B cell (primary cell): ENCODE measurements at regions of chr2 and their contacts with region 1.

Region 1: GRCh38 chr2:60550178-60550983 is 3.1 kb downstream of the BCL11A start:
- DNase-seq: peak; percentile 94
- ATAC-seq: peak; percentile 54
- H3K4me3 ChIP-seq: peak overlapping the region; percentile 78 to 98 (median 88)
- H3K4me3 Mint-ChIP-seq: peak overlapping the region; percentile 97
- H3K27ac ChIP-seq: peak overlapping the region; percentile 77 to 91
- H3K27ac Mint-ChIP-seq: peak overlapping the region; percentile 91
- H3K4me1 ChIP-seq: peaks cover 29 to 35% of the 10 kb centered on the region in 2 donors
- H3K4me1 Mint-ChIP-seq: peaks cover 36% of the 10 kb centered on the region
- H3K27me3 ChIP-seq: no peaks in the 10 kb centered on the region
- H3K27me3 Mint-ChIP-seq: no peaks in the 10 kb centered on the region
- CTCF ChIP-seq: peak; percentile 80

Region 2: GRCh38 chr2:59196511-59196910 is 1353.9 kb before region 1 on chr2:
- CTCF ChIA-PET with region 1: no interaction called
- POLR2A ChIA-PET with region 1: interaction called, 13 read pairs
- intact Hi-C with region 1: no loop called
- DNase-seq: no peak
- ATAC-seq: no peak
- H3K4me3 ChIP-seq: no peak overlapping the region
- H3K4me3 Mint-ChIP-seq: no peak overlapping the region
- H3K27ac ChIP-seq: no peak overlapping the region
- H3K27ac Mint-ChIP-seq: no peak overlapping the region
- H3K4me1 ChIP-seq: no peaks in the 10 kb centered on the region
- H3K4me1 Mint-ChIP-seq: no peaks in the 10 kb centered on the region
- H3K27me3 ChIP-seq: peaks cover 0 to 3% (median 0%) of the 10 kb centered on the region in 4 experiments
- H3K27me3 Mint-ChIP-seq: peaks cover 9% of the 10 kb centered on the region
- CTCF ChIP-seq: no peak

Region 3: DNA sequence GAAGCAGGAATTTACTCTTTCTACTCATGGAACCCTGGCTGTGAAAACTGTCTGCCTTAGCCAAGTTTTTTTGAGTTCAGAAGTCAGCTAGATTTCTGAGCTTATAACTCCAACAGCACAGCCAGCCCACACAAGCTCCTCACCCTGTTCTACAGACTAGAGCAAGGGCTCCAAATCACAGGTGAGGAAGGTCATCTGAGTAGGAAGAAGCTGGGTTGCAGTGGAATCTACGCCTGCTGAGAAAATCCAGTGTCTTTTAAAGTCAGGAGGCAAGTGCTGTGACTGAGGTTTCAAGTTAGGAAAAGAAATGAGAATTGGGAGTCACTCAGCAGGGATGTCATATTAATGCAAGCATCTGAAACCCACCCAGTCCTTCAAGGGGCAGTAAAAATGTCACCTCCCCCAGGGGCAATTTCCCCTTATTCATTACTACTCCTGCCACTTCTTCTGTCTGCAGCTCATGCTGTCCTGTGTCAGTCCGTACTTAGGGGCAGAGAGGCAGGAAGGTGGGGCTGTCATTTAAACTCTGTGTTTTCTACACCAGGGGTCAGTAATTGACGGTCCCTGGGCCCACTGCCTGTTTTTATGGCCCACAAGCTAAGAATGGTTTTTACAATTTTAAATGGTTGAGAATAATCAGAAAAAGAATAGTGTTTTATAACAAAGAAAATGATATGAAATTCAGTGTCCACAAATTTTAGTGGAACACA is 548.1 kb before region 1 on chr2:
- CTCF ChIA-PET with region 1: interaction called, 5 read pairs
- POLR2A ChIA-PET with region 1: no interaction called
- intact Hi-C with region 1: loop called (anchors 5 kb)
- DNase-seq: peak; percentile 20
- ATAC-seq: no peak
- H3K4me3 ChIP-seq: no peak overlapping the region
- H3K4me3 Mint-ChIP-seq: no peak overlapping the region
- H3K27ac ChIP-seq: no peak overlapping the region
- H3K27ac Mint-ChIP-seq: no peak overlapping the region
- H3K4me1 ChIP-seq: peaks cover 11 to 16% of the 10 kb centered on the region in 2 donors
- H3K4me1 Mint-ChIP-seq: peaks cover 19% of the 10 kb centered on the region
- H3K27me3 ChIP-seq: no peaks in the 10 kb centered on the region
- H3K27me3 Mint-ChIP-seq: no peaks in the 10 kb centered on the region
- CTCF ChIP-seq: no peak

Region 4: DNA sequence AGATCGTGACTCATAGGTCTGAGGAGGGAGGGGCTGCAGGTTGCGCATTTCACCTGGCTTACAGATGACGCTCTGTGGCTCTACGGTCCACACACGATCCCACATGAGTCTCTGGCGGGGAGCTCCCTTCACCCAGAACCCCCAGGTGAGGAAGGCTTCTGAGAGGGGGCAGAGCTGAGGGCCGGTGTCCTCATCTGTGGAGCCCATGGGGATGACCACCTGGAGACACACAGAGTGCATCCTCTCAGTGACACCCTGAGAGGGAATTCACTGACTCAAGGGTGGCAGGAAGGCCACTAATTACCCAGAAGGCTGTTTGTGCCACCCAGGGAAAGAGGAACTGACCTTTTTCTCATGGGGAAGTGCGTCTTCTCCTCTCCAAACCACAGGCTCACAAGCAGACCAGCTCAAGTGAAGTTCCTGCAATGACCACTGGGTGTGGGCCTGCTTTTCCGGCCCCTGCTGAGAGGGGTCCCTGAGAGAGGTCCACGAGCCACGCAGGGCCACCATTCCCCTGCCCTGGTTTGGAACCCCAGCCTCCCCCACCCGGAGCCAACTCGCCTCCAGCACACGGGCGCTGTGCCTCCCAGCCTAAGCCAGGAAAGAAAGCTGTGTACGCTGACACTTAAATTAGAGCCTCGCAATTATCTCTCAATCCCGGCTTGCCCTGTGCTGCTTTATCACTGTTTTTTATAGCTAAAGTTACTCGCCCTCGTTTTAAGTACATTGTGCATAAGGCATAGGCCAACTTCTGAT is 111.0 kb before region 1 on chr2:
- CTCF ChIA-PET with region 1: interaction called, 46 read pairs
- POLR2A ChIA-PET with region 1: interaction called, 24 read pairs
- intact Hi-C with region 1: loop called (anchors 1 kb)
- DNase-seq: peak; percentile 94
- ATAC-seq: peak; percentile 92
- H3K4me3 ChIP-seq: peak overlapping the region in 4 of 5 experiments; percentile 1 to 50 (median 31)
- H3K4me3 Mint-ChIP-seq: peak overlapping the region; percentile 88
- H3K27ac ChIP-seq: peak overlapping the region; percentile 88 to 90
- H3K27ac Mint-ChIP-seq: peak overlapping the region; percentile 100
- H3K4me1 ChIP-seq: peaks cover 75 to 81% of the 10 kb centered on the region in 2 donors
- H3K4me1 Mint-ChIP-seq: peaks cover 80% of the 10 kb centered on the region
- H3K27me3 ChIP-seq: no peaks in the 10 kb centered on the region
- H3K27me3 Mint-ChIP-seq: no peaks in the 10 kb centered on the region
- CTCF ChIP-seq: peak; percentile 84

Region 5: DNA sequence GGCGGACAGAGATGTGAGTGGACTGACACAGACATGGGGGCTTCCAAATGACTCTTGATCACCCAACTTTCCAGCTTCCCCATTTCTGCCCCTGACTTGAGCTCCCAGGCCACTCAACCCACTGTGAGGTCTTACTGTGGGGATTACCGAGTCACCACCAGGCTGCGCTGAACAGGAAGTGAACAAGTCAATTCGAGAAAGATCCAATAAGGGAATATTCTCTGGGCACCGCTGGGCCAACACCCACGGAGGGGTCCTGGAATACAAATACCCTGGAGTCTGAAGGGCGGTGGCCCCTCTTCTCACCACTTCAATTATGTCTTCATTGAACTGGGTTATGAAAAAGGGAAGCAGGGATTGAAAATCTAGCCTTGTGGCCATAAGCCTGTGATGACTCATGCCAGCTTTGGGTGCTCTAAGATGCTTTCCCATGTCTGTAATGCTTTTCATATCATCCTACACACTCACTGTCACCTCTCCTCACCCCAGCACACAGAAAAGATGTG is 34.6 kb before region 1 on chr2:
- CTCF ChIA-PET with region 1: interaction called, 14 read pairs
- POLR2A ChIA-PET with region 1: interaction called, 13 read pairs
- intact Hi-C with region 1: loop called (anchors 2 kb)
- DNase-seq: peak; percentile 79
- ATAC-seq: peak; percentile 74
- H3K4me3 ChIP-seq: peak overlapping the region in 1 of 5 experiments; percentile 9
- H3K4me3 Mint-ChIP-seq: peak overlapping the region; percentile 75
- H3K27ac ChIP-seq: peak overlapping the region; percentile 64 to 85
- H3K27ac Mint-ChIP-seq: peak overlapping the region; percentile 86
- H3K4me1 ChIP-seq: peaks cover 96 to 98% of the 10 kb centered on the region in 2 donors
- H3K4me1 Mint-ChIP-seq: peaks cover 92% of the 10 kb centered on the region
- H3K27me3 ChIP-seq: no peaks in the 10 kb centered on the region
- H3K27me3 Mint-ChIP-seq: no peaks in the 10 kb centered on the region
- CTCF ChIP-seq: peak; percentile 15

Region 6: DNA sequence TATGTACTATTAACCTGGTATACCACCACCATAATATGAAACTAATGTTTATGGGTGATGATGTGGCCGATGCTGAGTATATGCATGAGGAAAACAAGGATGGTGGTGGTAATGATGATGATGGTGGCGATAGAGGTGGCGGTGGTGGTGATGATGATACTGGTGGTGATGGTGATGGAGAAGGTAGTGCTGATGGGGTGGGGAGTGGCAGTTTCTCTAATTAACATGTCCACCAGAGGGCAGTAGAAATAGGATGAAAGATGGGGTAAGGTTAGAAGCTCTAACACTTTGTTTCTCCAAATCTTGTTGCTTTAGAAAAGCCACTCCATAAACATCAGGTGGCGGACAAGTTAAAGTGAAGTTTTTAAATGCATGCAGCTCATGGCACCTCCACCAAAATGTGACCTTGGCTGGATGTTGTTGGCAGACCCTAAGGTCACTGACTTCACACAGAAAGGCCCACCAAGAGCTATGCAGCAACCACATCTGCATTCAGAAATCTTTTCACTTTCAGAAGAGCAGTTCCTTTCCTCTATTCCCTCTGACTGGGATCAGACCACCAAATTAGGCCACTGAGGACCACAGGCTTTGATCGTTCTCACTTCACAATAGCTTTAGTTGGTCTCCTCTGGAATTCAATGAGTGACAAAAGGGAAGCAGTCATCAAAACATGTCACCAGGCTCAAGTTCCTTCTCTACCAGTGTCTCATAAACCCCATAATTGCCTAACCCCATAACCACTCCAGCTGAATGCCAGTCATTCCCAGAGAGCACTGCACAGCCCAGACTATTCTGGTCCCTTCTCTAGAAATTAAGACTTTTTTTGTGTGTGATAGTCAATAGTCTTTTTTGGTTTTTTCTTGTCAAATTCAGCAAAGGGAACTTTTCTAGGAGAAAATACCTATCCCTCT is 10.6 kb after region 1 on chr2:
- CTCF ChIA-PET with region 1: interaction called, 21 read pairs
- POLR2A ChIA-PET with region 1: interaction called, 7 read pairs
- intact Hi-C with region 1: no loop called
- DNase-seq: peak; percentile 75
- ATAC-seq: peak; percentile 53
- H3K4me3 ChIP-seq: no peak overlapping the region
- H3K4me3 Mint-ChIP-seq: no peak overlapping the region
- H3K27ac ChIP-seq: no peak overlapping the region
- H3K27ac Mint-ChIP-seq: peak overlapping the region; percentile 70
- H3K4me1 ChIP-seq: peaks cover 18% of the 10 kb centered on the region in 2 donors
- H3K4me1 Mint-ChIP-seq: peaks cover 37% of the 10 kb centered on the region
- H3K27me3 ChIP-seq: no peaks in the 10 kb centered on the region
- H3K27me3 Mint-ChIP-seq: no peaks in the 10 kb centered on the region
- CTCF ChIP-seq: peak; percentile 63